MCF 10A (cell line): ENCODE measurements at regions of chr2 and their contacts with region 1.

Region 1: DNA sequence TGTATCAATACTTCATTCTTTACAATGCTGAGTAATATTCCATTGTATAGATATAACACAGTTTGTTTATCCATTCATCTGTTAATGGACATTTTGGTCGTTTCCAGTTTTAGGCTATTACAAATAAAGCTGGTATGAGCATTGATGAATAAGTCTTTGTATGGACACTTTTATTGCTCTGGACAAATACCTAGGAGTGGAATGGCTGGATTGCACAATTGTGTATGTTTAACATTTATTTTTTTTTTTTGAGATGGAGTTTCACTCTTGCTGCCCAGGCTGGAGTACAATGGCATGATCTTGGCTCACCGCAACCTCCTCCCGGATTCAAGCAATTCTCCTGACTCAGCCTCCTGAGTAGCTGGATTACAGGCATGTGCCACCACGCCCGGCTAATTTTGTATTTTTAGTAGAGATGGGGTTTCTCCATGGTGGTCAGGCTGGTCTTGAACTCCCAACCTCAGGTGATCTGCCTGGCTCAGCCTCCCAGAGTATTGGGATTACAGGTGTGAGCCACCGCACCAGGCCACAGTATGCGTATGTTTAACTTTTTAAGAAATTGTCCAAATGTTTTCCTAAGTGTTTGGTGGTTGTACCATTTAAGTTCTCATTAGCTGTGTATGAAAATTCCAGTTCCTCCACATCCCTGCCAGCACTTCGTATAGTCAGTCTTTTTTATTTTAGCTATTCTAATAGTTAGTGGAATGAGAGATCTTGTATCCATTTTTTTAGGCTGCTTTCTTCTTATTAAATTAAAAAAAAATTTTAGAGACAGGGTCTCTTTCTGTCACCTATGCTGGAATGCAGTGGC is 194.9 kb upstream of the HAAO start:
- DNase-seq: peak; percentile 88
- H3K4me3 Mint-ChIP-seq: no peak overlapping the region
- H3K27ac Mint-ChIP-seq: peak overlapping the region; percentile 90
- H3K4me1 Mint-ChIP-seq: peaks cover 19% of the 10 kb centered on the region
- H3K27me3 Mint-ChIP-seq: no peaks in the 10 kb centered on the region
- CTCF ChIP-seq: no peak

Region 2: DNA sequence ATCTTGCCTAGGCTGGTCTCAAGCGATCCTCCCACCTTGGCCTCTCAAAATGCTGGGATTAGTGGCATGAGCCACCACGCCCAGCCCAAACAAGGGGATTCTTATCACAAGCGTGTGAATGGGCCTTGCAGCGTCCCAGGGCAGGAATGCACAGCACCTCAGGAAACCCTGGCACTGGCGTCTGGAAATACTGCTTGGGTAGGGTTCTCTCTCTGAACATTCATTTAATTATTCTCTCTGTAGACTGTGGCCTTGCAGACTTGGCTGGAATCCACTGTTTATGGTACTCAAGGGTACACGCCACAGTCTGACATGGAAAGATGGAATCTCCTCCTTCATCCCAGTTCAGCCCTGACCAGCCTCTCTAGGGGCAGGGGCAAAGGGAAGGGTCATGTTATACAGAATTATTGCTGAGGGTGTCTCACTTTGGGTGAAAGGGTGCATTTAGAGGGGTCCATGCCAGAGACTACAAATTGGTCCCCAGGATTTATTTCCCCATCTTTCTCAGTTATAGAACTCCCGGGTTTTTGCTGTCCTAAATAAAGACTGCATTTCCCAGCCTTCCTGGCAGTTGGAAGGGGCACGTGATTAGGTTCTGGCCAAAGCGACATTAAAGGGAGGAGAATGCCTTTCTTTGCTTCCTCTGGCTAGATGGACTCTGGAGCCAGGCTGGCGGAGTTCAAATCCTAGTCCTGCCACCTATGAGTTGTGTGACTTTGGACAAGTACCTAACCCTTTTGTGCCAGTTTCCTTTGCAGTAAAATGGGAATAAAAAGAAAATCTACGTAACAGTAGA is 47.7 kb before region 1 on chr2:
- CTCF ChIA-PET with region 1: no interaction called
- POLR2A ChIA-PET with region 1: no interaction called
- intact Hi-C with region 1: no loop called
- DNase-seq: no peak
- H3K4me3 Mint-ChIP-seq: no peak overlapping the region
- H3K27ac Mint-ChIP-seq: no peak overlapping the region
- H3K4me1 Mint-ChIP-seq: peaks cover 9% of the 10 kb centered on the region
- H3K27me3 Mint-ChIP-seq: no peaks in the 10 kb centered on the region
- CTCF ChIP-seq: no peak

Region 3: GRCh38 chr2:42998721-42999120 is 11.4 kb after region 1 on chr2:
- CTCF ChIA-PET with region 1: no interaction called
- POLR2A ChIA-PET with region 1: no interaction called
- intact Hi-C with region 1: no loop called
- DNase-seq: no peak
- H3K4me3 Mint-ChIP-seq: no peak overlapping the region
- H3K27ac Mint-ChIP-seq: no peak overlapping the region
- H3K4me1 Mint-ChIP-seq: no peaks in the 10 kb centered on the region
- H3K27me3 Mint-ChIP-seq: no peaks in the 10 kb centered on the region
- CTCF ChIP-seq: no peak

Region 4: GRCh38 chr2:43010438-43011157 is 23.3 kb after region 1 on chr2:
- CTCF ChIA-PET with region 1: interaction called, 6 read pairs
- POLR2A ChIA-PET with region 1: interaction called, 25 read pairs
- intact Hi-C with region 1: no loop called
- DNase-seq: peak; percentile 68
- H3K4me3 Mint-ChIP-seq: no peak overlapping the region
- H3K27ac Mint-ChIP-seq: peak overlapping the region; percentile 26
- H3K4me1 Mint-ChIP-seq: peaks cover 28% of the 10 kb centered on the region
- H3K27me3 Mint-ChIP-seq: no peaks in the 10 kb centered on the region
- CTCF ChIP-seq: no peak

Region 5: DNA sequence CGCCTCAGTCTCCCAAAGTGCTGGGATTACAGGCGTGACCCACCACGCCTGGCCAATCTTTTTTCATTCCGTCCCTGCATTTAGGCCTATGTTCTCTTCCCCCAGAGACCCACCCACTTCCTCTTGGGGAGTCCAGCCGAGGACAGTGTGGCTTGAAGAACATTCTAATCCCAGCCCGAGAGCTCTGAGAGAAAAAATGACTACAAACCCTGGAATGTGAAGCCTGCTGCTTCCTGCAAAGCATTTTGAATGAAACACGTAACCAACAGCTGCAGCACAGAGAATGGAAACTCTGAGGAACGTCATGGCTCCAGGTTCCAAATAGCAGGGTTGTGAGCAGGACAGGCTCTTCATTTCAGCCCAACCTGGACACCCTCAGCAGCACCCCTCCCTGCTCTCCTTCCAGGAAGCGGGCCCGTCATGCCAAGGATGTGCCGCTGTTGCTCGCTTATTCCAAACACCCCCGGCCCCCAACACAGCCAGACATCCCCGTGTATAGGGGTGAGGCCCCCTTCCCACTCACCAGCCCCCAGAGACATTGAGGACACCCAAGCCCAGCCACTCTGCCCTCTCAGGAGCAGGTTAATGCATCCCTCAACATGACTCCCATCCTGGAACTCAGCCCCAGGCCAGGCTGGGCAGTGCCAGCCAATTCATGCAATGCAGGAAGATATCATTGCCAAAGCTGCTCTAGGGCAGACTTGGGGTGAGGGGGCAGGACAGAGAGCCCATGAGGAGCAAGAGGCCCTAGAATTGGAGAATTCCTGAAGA is 99.3 kb after region 1 on chr2:
- CTCF ChIA-PET with region 1: no interaction called
- POLR2A ChIA-PET with region 1: interaction called, 12 read pairs
- intact Hi-C with region 1: loop called (anchors 2 kb)
- DNase-seq: peak; percentile 98
- H3K4me3 Mint-ChIP-seq: peak overlapping the region; percentile 48
- H3K27ac Mint-ChIP-seq: peak overlapping the region; percentile 94
- H3K4me1 Mint-ChIP-seq: peaks cover 60% of the 10 kb centered on the region
- H3K27me3 Mint-ChIP-seq: no peaks in the 10 kb centered on the region
- CTCF ChIP-seq: no peak

Region 6: DNA sequence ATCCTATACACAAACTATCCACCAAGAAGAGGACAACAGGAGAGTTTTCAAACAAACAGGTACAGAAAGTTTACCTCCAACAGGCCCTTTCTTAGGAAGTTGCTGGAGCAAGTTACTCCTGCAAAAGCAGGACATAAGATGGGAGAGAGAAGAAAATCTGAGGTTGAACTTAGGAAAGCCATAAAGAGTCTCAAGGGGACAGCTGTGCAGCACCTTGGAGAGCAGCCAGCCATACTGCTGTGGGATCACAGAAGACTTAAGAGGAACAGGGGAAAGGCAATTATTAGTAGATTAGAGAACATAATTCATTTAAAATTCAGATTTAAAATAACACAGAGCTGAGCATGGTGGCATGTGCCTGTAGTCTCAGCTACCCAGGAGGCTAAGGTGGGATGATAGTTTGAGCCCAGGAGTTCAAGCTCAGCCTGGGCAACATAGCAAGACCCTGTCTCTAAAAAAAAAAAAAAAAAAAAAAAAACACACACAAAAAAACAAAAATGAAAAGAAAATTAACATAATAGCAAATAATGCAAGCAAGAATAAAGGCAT is 1806.1 kb after region 1 on chr2:
- CTCF ChIA-PET with region 1: no interaction called
- POLR2A ChIA-PET with region 1: no interaction called
- intact Hi-C with region 1: no loop called
- DNase-seq: peak; percentile 46
- H3K4me3 Mint-ChIP-seq: no peak overlapping the region
- H3K27ac Mint-ChIP-seq: no peak overlapping the region
- H3K4me1 Mint-ChIP-seq: no peaks in the 10 kb centered on the region
- H3K27me3 Mint-ChIP-seq: peaks cover 27% of the 10 kb centered on the region
- CTCF ChIP-seq: no peak